ENCODE measurements at regions of chr10 and their contacts with region 1.

Region 1: DNA sequence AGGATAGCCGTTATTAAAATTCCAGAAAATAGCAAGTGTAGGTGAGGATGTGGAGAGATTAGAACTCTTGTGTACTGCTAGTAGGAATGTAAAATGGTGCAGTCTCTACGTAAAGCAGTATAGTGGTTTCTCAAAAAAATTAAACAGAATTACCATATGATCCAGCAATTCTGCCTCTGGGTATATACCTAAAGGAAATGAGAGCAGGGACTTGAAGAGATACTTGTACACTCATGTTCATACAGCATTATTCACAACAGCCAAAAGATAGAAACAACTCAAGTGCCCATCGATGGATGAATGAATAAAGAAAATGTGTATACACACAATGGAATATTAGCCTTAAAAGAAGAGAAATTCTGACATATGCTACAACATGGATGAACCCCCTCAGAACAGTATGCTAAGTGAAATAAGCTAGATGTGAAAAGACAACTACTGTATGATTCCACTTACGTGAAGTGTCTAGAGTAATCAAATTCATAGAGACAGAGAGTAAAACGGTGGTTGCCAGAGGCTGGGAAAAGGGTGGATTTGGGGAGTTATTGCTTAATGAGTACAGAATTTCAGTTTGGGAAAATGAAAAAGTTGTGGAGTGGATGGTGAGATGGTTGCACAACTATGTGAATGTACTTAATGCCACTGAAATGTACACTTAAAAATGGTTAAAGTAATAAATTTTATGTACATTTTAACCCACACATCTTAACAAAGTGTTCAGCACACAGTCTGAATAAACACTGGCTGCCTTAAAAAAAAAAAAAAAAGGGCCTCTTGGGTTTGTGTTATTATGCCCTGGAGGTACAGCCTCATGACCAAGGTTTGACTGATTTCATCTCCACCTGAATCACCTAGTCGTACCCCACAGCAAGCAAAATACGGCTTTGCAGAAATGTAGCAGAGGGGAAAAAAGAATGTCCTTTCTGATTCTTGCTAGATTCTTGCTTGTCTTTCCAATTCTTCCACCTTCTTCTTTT is 26.2 kb downstream of the BUB3 start:
- DNase-seq: no peak
- H3K4me3 ChIP-seq: no peak overlapping the region
- H3K4me3 Mint-ChIP-seq: no peak overlapping the region
- H3K27ac Mint-ChIP-seq: no peak overlapping the region
- H3K4me1 ChIP-seq: no peaks in the 10 kb centered on the region
- H3K4me1 Mint-ChIP-seq: no peaks in the 10 kb centered on the region
- H3K27me3 ChIP-seq: no peaks in the 10 kb centered on the region
- H3K27me3 Mint-ChIP-seq: no peaks in the 10 kb centered on the region
- CTCF ChIP-seq: no peak

Region 2: DNA sequence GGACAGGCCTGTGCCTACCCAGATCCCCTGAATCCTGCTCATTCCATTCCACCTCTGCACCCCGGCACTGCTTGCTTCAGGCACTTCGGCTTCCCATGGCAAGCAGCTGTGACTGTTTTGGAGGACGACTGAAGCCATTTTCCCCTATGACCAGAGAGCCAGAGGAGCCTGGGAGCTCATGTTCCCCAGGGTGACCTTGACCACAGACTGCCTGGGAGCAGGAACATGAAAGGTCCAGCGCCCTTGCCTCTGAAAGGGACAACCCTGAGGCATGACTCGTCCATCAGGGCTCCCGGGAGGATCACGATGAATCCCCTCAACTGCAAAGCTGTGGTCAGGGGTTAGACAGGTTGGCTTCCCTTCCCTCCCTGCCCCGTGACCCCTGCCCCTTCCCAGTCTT is 61.3 kb before region 1 on chr10:
- CTCF ChIA-PET with region 1: no interaction called
- POLR2A ChIA-PET with region 1: interaction called, 12 read pairs
- intact Hi-C with region 1: no loop called
- DNase-seq: no peak
- H3K4me3 ChIP-seq: no peak overlapping the region
- H3K4me3 Mint-ChIP-seq: no peak overlapping the region
- H3K27ac Mint-ChIP-seq: no peak overlapping the region
- H3K4me1 ChIP-seq: no peaks in the 10 kb centered on the region
- H3K4me1 Mint-ChIP-seq: no peaks in the 10 kb centered on the region
- H3K27me3 ChIP-seq: no peaks in the 10 kb centered on the region; the same call in none of the 2 replicates
- H3K27me3 Mint-ChIP-seq: peaks cover 6% of the 10 kb centered on the region
- CTCF ChIP-seq: no peak

Region 3: GRCh38 chr10:123229927-123230632 is 49.7 kb after region 1 on chr10:
- CTCF ChIA-PET with region 1: no interaction called
- POLR2A ChIA-PET with region 1: no interaction called
- intact Hi-C with region 1: no loop called
- DNase-seq: no peak
- H3K4me3 ChIP-seq: no peak overlapping the region
- H3K4me3 Mint-ChIP-seq: no peak overlapping the region
- H3K27ac Mint-ChIP-seq: no peak overlapping the region
- H3K4me1 ChIP-seq: no peaks in the 10 kb centered on the region
- H3K4me1 Mint-ChIP-seq: no peaks in the 10 kb centered on the region
- H3K27me3 ChIP-seq: no peaks in the 10 kb centered on the region
- H3K27me3 Mint-ChIP-seq: no peaks in the 10 kb centered on the region
- CTCF ChIP-seq: no peak

Measured in Caco-2 (cell line).